ENCODE measurements at regions of chr22 and their contacts with region 1.

Region 1: DNA sequence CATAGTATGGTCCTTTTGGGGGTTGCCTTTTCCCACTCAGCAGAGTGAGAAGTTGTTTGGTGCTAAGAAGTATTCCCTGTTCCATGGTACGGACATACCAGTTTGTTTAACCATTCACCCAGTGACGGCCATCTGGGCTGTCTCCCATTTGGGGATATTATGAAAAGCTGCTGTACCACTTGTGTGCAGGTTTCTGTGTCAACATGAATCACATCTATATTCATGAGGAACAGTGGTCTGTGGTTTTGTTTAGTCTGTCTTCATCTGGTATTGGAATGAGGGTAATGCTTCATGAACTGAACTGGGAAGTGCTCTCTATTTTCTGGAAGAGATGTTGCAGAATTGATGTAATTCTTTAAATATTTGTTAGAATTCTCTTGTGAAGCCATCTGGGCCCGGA is 89.5 kb downstream of the TRMU start:
- DNase-seq: no peak
- H3K4me3 ChIP-seq: no peak overlapping the region
- H3K27ac ChIP-seq: no peak overlapping the region
- H3K4me1 ChIP-seq: no peaks in the 10 kb centered on the region
- H3K27me3 ChIP-seq: no peaks in the 10 kb centered on the region
- CTCF ChIP-seq: no peak
- EP300 ChIP-seq: no peak
- POLR2A ChIP-seq: no peak

Region 2: DNA sequence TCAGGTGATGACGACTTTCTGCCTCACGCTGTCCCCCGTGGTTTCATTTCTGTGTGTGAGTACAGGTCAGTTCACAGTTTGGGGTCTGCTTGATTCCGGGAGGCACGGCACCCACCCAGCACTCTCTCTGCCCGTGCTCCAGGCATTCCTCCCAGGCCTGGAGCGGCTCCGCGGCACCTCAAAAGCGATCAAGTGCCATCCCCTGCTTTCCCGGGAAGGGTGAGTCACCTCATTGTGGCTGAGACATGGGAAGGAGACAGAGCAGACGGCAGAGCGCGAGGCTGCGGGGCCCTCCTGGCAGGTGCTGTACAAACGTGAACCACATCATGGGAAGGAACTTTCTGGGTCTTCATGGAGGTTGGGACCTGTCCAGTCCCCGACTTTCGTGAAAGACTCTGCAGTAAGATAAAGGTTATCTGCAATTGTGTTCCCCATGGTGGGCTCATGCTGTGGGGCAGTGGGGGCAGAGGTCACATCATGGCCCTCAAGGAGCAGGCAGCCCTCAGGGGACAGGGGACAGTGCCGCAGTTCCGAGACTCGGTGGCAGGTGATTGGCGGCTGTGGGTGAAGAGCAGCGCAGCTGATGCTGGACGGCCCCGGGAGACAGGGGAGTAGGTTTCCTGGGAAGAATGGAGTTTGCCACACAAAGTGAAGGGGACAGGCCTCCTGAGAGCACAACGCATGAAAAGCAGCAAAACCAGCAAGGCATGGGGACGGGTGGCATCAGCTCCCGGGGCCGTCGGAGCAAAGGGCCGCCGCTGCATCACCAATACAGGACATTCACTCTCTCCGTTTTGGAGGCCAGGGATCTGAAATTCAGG is 47.1 kb after region 1 on chr22:
- intact Hi-C with region 1: no loop called
- DNase-seq: no peak
- H3K4me3 ChIP-seq: no peak overlapping the region
- H3K27ac ChIP-seq: no peak overlapping the region
- H3K4me1 ChIP-seq: no peaks in the 10 kb centered on the region
- H3K27me3 ChIP-seq: no peaks in the 10 kb centered on the region
- CTCF ChIP-seq: no peak
- EP300 ChIP-seq: no peak
- POLR2A ChIP-seq: no peak

Region 3: DNA sequence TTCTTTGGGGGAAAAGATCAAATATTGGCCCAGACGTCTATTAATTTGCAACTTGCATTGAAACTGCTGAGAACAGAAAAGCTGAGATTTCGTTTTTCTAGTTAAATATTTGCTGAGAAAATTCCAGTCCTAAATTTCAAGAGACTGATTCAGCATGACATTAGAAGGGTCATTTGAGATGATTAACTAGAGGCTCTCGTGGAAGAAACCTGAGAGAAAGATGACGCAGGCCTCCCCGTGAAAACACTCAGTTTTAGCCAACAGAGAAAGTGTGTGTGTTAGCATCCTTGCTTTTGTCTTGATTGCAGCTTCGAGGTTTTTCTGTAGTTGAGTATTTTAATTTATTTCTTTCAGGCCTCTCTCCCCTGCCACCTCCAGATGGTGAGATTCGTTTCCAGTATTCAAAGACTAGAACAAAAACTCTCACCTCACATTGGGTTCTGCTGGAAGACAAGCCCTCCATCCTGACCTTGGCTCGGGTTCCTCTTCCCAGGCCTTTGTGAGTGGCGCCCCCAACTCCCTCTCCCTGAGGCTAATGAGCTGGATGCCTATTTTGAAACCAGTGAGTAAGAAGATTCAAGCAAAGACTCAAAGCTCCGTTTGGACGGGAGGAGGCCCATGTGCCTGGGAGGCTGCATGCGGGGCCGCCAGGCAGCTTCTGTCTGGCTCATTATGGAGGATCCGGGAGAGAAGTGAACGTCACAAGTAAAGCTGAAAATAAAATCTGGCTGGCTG is 60.0 kb after region 1 on chr22:
- intact Hi-C with region 1: loop called in 1 of 4 experiments (anchors 10 kb)
- DNase-seq: no peak
- H3K4me3 ChIP-seq: no peak overlapping the region
- H3K27ac ChIP-seq: no peak overlapping the region
- H3K4me1 ChIP-seq: no peaks in the 10 kb centered on the region
- H3K27me3 ChIP-seq: no peaks in the 10 kb centered on the region
- CTCF ChIP-seq: no peak
- EP300 ChIP-seq: no peak
- POLR2A ChIP-seq: no peak

Measured in ovary (tissue), 10 donors.